Activated CD4-positive, alpha-beta memory T cell treated with anti-CD3 and anti-CD28 coated beads, Interleukin-2, amount 10 ng/mL, durations not matched to agents 7 days and 5 days (primary cell): ENCODE measurements at regions of chr18 and their contacts with region 1.

Region 1: DNA sequence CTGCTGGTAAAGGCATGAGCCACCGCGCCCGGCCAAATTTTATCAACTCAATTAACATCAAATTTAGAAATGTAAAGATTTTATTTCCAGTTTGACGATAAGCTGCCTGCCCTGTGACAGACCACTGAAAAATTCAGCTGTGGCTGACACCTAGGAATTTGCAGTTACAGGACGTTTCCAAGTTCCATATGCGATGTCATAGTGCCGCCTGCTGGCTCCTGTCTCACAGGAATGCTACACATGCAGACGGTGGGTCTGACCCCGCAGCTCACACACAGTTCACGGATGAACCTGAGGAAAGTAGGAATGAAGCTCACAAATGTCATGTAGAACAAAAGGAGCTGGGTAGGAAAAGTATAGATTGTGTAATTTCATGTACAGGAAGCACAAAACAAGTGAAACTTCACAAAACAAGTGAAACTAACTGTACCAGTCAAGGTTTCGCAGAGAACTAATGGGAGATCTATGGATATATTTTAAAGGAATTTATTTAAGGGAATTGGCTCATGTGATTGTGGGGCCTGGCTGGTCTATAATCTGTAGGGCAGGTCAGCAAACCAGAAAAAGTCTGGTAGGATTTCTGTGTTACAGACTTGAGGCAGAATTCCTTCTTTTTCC is 13.2 kb upstream of the SEH1L start:
- DNase-seq: peak; percentile 79
- H3K4me3 Mint-ChIP-seq: no peak overlapping the region
- H3K27ac Mint-ChIP-seq: no peak overlapping the region
- H3K4me1 Mint-ChIP-seq: peaks cover 4% of the 10 kb centered on the region
- H3K27me3 Mint-ChIP-seq: peaks cover 15% of the 10 kb centered on the region

Region 2: GRCh38 chr18:12711446-12711845 is 223.1 kb before region 1 on chr18:
- CTCF ChIA-PET with region 1: interaction called, 11 read pairs
- POLR2A ChIA-PET with region 1: no interaction called
- DNase-seq: no peak
- H3K4me3 Mint-ChIP-seq: no peak overlapping the region
- H3K27ac Mint-ChIP-seq: no peak overlapping the region
- H3K4me1 Mint-ChIP-seq: peaks cover 3% of the 10 kb centered on the region
- H3K27me3 Mint-ChIP-seq: no peaks in the 10 kb centered on the region

Region 3: DNA sequence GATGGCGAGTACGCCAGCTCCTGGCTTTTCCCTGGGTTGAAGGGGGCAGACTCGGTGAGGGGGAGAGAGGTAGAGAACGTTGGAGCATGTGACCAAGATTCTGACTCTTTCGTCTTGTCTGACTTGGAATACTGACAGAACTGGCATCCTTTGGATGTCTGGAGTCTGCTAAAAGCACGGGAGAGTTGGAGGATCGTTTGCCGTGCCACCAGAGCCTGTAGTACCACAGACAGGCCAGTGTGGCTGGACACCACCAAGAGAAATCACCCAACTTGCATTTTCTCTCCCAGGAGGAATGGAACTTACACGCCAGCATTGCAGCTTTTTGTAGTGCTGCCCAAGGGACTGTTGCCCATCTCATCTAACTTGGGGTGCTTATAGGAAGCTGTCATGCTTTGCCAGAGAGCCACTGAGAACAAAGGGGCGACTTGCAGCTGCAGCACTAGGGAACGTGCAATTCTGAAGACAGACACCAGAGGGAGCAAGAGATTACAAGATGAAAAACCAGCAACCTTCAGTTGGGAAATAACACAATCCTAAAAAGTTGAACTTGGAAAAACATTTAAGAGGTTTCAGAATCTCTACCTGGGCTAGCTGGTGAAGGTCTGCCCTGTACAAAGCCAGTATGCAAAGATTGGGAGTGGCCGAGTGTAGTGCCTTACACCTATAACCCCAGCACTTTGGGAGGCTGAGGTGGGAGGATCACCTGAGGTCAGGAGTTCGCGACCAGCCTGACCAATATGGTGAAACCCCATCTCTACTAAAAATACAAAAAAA is 207.6 kb before region 1 on chr18:
- CTCF ChIA-PET with region 1: interaction called, 82 read pairs
- POLR2A ChIA-PET with region 1: no interaction called
- DNase-seq: peak; percentile 47
- H3K4me3 Mint-ChIP-seq: no peak overlapping the region
- H3K27ac Mint-ChIP-seq: no peak overlapping the region
- H3K4me1 Mint-ChIP-seq: peaks cover 7% of the 10 kb centered on the region
- H3K27me3 Mint-ChIP-seq: no peaks in the 10 kb centered on the region

Region 4: GRCh38 chr18:12883684-12884405 is 50.7 kb before region 1 on chr18 and contains the start of gene PTPN2:
- CTCF ChIA-PET with region 1: interaction called, 20 read pairs
- POLR2A ChIA-PET with region 1: interaction called, 5 read pairs
- DNase-seq: peak; percentile 93
- H3K4me3 Mint-ChIP-seq: peak within 1 kb of the TSS; percentile 92
- H3K27ac Mint-ChIP-seq: peak within 1 kb of the TSS; percentile 91
- H3K4me1 Mint-ChIP-seq: peaks cover 60% of the 10 kb centered on the region
- H3K27me3 Mint-ChIP-seq: no peaks in the 10 kb centered on the region
- total RNA-seq, gene PTPN2: 82.9 to 90.8 TPM

Region 5: DNA sequence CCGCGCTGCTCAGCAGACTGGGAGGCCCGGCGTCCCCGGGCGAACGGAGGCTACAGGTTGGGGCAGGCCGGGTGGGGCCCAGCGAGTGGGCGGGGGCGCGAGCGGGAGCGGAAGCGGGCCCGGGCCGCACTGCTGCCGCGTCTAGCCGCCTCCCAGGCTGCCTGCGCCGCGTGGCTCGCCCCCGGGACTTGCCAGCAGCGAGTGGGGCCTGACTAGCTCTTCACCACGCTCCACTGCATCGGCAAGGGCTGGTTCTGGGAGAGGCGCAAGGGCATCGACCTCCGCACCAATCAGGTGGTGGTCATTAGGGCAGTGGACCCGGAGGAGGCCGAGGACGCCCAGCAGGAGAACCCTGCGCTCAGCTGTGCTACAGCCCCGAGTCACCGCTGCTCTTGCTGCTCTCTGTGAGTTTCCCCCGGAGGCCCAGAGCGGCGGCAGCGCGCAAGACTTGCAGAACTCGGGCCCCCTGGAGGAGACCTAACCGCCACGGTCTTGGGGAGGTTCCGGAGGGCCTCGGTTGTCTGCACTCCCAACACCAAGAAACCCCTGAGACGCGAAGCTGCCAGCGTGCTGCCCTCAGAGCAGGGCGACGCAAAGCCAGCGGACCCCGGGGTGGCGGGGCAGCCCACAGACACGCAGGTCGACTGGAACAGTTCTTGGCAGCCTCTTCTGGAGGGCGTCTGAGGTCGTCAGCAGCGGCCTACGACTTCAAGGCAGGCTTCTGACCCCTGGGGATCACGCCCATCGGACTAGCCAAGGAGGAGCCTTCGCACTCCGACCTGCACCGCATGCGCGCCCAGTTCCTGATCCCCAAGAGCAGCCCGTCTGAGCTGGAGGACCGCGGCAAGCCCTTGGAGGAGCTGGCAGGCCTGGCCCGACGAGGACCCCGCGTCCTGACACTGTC is 23.3 kb before region 1 on chr18:
- CTCF ChIA-PET with region 1: interaction called, 12 read pairs
- POLR2A ChIA-PET with region 1: no interaction called
- DNase-seq: peak; percentile 56
- H3K4me3 Mint-ChIP-seq: peak overlapping the region; percentile 32
- H3K27ac Mint-ChIP-seq: no peak overlapping the region
- H3K4me1 Mint-ChIP-seq: peaks cover 10% of the 10 kb centered on the region
- H3K27me3 Mint-ChIP-seq: peaks cover 21% of the 10 kb centered on the region

Region 6: DNA sequence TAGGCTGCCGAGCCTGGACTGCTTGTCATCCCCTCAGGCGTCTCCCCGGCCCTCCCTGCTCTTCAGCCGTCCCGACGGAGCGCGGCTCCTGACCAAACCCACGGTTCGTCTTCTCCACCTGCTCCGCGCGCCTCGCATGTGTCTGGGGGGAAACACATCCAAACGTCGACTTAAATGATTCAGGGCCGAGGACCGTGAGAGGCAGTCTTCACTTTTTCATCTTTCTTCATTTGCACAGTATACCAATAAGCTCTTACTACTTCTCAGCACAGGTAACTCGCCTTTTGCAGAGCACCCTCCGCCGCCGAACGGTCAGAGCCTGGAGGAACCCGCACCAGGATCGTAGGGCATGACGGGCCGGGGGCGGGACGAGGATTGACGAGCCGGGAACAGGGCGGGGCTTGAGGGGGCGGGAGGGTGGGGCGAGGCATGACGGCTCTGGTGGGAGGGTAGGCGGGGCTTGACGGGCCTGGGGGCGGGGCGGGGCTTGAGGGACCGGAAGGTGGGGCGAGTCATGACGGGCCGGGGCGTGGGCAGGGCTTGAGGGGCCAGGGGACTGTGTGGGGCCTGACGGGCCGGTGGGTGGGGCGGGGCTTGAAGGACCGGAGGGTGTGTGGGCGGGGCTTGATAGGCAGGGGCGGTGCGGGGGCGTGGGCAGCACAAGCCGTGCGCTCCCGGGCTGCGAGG is 12.9 kb after region 1 on chr18 and contains the start of gene SEH1L:
- CTCF ChIA-PET with region 1: interaction called, 24 read pairs
- POLR2A ChIA-PET with region 1: interaction called, 3 read pairs
- DNase-seq: peak; percentile 99
- H3K4me3 Mint-ChIP-seq: peak within 1 kb of the TSS; percentile 96
- H3K27ac Mint-ChIP-seq: peak within 1 kb of the TSS; percentile 98
- H3K4me1 Mint-ChIP-seq: peaks cover 42% of the 10 kb centered on the region
- H3K27me3 Mint-ChIP-seq: no peaks in the 10 kb centered on the region
- total RNA-seq, gene SEH1L: 36.3 to 41.6 TPM

Region 7: GRCh38 chr18:13151656-13152055 is 217.1 kb after region 1 on chr18:
- CTCF ChIA-PET with region 1: no interaction called
- POLR2A ChIA-PET with region 1: no interaction called
- DNase-seq: no peak
- H3K4me3 Mint-ChIP-seq: no peak overlapping the region
- H3K27ac Mint-ChIP-seq: no peak overlapping the region
- H3K4me1 Mint-ChIP-seq: no peaks in the 10 kb centered on the region
- H3K27me3 Mint-ChIP-seq: peaks cover 37% of the 10 kb centered on the region

Region 8: DNA sequence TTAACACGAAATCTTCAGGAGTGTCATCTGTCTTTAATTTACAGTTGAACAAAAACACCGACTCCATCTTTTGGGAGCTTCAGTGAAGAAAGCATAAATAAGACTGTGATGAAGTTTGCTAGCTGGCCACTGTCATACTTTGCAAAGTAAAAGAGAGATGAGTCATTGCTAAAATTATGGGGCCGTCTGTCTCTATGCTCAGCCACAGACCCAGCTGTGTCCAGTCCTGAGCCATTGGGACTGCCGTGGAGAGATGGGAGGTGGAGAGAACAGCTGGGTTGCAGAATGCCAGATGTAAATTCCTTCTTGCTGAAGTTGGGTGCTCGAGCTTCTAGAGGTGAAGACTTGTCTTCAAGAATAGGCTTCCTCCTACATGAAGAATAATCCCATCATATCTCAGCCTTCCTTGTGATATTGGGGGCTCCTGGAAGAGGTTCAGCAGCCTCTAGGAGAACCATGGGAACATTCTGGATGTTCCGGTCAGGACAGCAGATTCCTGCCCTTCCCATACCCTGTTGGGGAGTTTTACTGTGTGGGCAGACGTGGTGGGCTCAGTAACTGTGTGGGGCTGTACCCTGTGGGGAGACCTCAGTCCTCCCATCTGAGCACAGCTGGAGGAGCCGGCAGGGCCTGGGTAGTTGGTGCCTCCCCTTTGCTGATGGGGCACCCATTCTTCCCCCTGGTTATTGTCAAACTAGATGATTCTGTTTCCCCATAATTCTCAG is 355.1 kb after region 1 on chr18:
- CTCF ChIA-PET with region 1: no interaction called
- POLR2A ChIA-PET with region 1: no interaction called
- DNase-seq: no peak
- H3K4me3 Mint-ChIP-seq: no peak overlapping the region
- H3K27ac Mint-ChIP-seq: peak overlapping the region; percentile 38
- H3K4me1 Mint-ChIP-seq: peaks cover 71% of the 10 kb centered on the region
- H3K27me3 Mint-ChIP-seq: no peaks in the 10 kb centered on the region